Lower leg skin (tissue), 4 donors: ENCODE measurements at regions of chr14 and their contacts with region 1.

Region 1: DNA sequence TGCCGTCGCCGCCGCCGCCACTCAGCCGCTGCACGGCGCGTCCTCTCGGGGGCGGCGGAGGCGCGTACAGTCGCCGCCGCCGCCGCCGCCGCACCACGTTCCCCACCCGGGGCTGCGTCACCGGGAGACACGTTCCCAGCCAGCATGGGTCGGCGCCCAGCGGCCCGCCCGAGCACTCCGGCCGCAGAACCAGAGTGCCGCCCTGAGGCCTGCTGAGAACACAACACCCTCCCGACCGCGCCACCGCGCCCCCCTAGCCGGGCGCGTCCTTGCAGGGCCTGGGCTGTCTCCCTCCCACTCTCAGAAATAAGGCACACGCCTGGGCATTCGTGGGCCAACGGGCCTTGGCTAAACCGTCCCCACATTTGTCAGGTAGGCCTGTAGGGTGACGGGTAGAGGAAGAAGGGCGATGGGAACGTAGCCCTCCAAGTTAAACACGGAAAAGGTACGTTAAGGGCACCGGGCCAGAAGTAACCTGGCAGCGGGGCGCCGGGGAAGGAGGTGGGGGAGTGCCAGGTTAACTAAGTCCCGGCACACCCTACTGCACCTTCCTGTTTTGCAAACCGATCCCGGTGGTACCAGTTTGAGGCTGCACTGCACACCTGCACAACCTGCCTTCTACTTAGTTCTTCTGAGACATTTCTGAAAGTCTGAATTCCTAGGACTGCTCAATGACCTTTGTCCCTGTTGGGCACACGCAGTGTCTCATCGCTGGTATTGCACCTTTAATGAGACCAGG is at the start of gene MAP4K5:
- DNase-seq: peak; percentile 87 to 98
- H3K4me3 ChIP-seq: peak within 1 kb of the TSS; percentile 93
- CTCF ChIP-seq: peak in 1 of 3 donors; percentile 58
- POLR2A ChIP-seq: peak in 1 of 2 donors; percentile 16
- total RNA-seq, gene MAP4K5: 119 to 292 (median 218) TPM

Region 2: DNA sequence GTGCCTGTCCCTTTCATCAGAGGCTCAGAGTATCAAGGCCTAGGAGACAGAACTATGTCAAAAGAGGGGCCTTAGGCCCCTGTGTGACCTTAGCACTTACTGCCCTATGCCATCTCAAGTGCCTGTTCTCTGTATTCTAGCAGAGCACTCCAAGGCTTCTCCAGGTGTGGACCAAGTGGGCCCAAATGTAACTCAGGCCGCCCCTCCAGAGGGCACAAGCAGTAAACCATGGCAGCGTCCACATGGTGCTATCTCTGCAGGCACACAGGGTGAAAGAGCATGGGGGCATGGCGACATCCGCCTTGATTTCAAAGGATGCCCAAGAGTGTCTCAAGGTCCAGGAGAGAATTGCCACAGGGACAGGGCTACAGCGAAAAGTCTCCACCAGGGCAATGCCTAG is 1575.2 kb before region 1 on chr14:
- intact Hi-C with region 1: no loop called
- DNase-seq: no peak
- H3K4me3 ChIP-seq: no peak overlapping the region
- CTCF ChIP-seq: no peak
- POLR2A ChIP-seq: no peak

Region 3: GRCh38 chr14:50321009-50321660 is 211.5 kb before region 1 on chr14:
- intact Hi-C with region 1: loop called (anchors 5 kb)
- DNase-seq: peak in 1 of 2 donors; percentile 73
- H3K4me3 ChIP-seq: no peak overlapping the region
- CTCF ChIP-seq: peak in 1 of 3 donors; percentile 29
- POLR2A ChIP-seq: no peak

Region 4: GRCh38 chr14:50452979-50453705 is 79.5 kb before region 1 on chr14:
- intact Hi-C with region 1: no loop called
- DNase-seq: no peak
- H3K4me3 ChIP-seq: no peak overlapping the region
- CTCF ChIP-seq: no peak
- POLR2A ChIP-seq: no peak

Region 5: GRCh38 chr14:50775357-50775756 is 242.7 kb after region 1 on chr14:
- intact Hi-C with region 1: loop called (anchors 5 kb)
- DNase-seq: no peak
- H3K4me3 ChIP-seq: no peak overlapping the region
- CTCF ChIP-seq: no peak
- POLR2A ChIP-seq: no peak